ENCODE measurements at regions of chr7 and their contacts with region 1.

Region 1: DNA sequence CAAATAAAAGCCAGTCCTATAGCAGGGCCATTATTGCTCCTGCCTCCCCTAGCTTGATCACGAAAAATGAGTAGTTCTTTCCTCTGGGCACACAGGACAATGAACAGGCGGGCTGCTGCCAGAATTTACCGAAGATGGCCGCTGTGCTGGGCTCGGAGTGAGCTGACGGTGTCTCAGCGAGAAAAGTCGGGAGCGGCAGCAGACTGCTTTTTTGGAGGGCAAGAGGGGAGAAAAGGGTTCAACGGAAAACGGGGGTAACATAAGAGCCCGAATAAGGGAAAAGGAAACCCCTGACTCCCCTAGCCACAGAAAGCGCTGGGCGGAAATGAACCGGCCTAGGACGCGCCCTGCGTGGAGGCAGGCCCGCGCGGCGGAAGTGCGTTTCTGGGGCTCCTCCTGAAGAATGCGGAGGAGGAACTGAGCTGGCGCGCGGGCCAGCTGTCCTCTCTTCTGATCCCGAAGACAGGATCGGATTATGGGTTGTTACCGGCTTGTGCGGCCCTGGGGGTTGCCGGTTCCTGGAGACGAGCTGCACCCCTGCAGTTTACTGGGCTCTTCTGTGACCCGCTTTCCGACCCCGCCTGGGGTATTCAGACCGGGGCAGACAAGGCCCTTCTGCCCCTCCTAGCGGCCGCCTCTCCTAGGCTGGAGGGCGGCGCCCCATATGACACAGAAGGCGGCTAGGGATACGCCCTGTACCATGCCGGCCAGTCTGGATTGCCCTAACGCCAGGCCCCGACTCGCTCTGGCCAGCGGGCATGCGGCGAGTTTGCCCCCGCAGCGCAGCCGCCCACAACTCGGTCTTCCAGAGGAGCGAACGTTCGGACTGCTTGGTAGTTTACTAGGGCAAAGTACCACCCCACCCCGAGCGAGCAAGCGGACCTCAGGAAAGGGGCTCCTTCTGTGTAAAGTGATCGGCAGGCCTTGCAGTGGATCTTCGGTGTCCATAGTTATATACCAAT is 30.1 kb upstream of the KMT2E start:
- DNase-seq: peak; percentile 82
- H3K4me3 Mint-ChIP-seq: peak overlapping the region; percentile 99
- H3K27ac Mint-ChIP-seq: peak overlapping the region; percentile 100
- H3K4me1 Mint-ChIP-seq: peaks cover 76% of the 10 kb centered on the region
- H3K27me3 Mint-ChIP-seq: no peaks in the 10 kb centered on the region

Region 2: DNA sequence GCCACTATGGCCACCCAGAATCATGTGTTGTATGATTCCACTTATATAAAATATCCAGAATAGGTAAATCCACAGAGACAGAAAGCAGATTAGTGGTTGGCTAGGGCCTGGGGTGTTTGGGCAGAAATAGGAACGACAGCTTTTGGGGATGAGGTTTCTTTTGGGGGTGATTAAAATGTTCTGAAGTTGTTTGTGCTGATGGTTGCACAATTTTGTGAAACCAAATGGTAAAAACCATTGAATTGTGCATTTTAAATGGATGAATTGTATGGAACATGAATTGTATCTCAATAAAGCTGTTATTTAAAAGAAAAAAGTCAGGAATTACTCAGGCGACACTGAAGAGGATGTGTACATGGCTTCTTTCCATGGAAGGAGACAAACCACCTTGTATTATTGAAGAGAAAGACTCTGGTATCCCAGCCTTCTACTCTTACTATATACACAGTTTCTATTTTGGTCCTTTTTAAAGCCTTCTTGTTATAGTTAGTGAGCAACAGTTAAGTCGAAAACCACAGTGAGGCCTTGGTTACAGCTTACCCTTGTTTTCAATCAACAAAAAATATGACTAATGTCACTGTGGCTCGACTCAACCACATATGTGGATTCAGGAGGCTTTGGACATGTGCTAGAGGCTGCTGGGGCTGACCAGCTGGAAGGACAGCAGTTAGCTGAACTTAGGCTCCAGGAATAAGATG is 27.0 kb before region 1 on chr7:
- intact Hi-C with region 1: loop called (anchors 1 kb)
- DNase-seq: peak; percentile 62
- H3K4me3 Mint-ChIP-seq: peak overlapping the region; percentile 69
- H3K27ac Mint-ChIP-seq: peak overlapping the region; percentile 100
- H3K4me1 Mint-ChIP-seq: peaks cover 67% of the 10 kb centered on the region
- H3K27me3 Mint-ChIP-seq: no peaks in the 10 kb centered on the region

Region 3: DNA sequence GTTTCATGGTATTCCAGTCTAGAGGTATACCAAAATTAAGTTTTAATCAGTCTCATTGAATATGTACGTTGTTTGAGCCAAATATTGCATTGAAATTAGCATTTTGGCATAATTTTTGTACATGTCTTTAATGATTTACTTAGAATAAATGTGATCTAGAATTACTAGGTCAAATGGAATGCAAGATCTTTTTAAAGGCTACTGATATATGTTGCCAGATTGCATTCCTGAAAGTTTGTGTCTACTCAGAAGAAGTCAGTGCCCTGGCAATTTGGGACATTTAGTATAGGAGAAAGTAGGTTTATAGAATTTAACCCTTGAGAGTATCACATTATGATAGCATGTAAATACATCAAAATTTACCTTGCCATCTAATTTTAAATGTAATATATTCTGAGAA is 62.6 kb after region 1 on chr7:
- intact Hi-C with region 1: loop called (anchors 1 kb)
- DNase-seq: no peak
- H3K4me3 Mint-ChIP-seq: no peak overlapping the region
- H3K27ac Mint-ChIP-seq: no peak overlapping the region
- H3K4me1 Mint-ChIP-seq: peaks cover 41% of the 10 kb centered on the region
- H3K27me3 Mint-ChIP-seq: no peaks in the 10 kb centered on the region

Region 4: DNA sequence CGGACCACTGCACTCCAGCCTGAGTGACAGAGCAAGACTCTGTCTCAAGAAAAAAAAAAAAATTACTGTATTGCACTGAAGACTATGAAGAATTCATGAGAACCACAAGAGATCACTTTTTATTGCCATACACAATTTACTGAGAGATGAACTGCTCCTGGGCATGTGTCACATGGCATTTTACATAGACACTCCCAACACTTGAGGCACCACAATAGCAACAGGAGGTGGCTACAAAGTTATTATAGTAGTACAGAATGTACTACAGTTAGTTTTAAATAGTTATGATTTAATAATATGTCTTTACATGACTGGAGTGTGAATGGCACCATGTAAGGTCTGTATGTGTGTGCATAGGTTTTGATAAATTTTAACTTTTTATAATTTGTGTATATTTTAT is 100.7 kb after region 1 on chr7:
- intact Hi-C with region 1: no loop called
- DNase-seq: no peak
- H3K4me3 Mint-ChIP-seq: no peak overlapping the region
- H3K27ac Mint-ChIP-seq: no peak overlapping the region
- H3K4me1 Mint-ChIP-seq: peaks cover 22% of the 10 kb centered on the region
- H3K27me3 Mint-ChIP-seq: no peaks in the 10 kb centered on the region

Region 5: GRCh38 chr7:105336009-105336408 is 352.1 kb after region 1 on chr7:
- intact Hi-C with region 1: loop called (anchors 5 kb)
- DNase-seq: no peak
- H3K4me3 Mint-ChIP-seq: no peak overlapping the region
- H3K27ac Mint-ChIP-seq: no peak overlapping the region
- H3K4me1 Mint-ChIP-seq: peaks cover 13% of the 10 kb centered on the region
- H3K27me3 Mint-ChIP-seq: no peaks in the 10 kb centered on the region

Region 6: GRCh38 chr7:105429746-105430612 is 446.1 kb after region 1 on chr7:
- intact Hi-C with region 1: loop called (anchors 1 kb)
- DNase-seq: peak; percentile 19
- H3K4me3 Mint-ChIP-seq: no peak overlapping the region
- H3K27ac Mint-ChIP-seq: no peak overlapping the region
- H3K4me1 Mint-ChIP-seq: peaks cover 12% of the 10 kb centered on the region
- H3K27me3 Mint-ChIP-seq: no peaks in the 10 kb centered on the region

Region 7: GRCh38 chr7:105589356-105590077 is 605.7 kb after region 1 on chr7:
- intact Hi-C with region 1: loop called (anchors 5 kb)
- DNase-seq: peak; percentile 24
- H3K4me3 Mint-ChIP-seq: no peak overlapping the region
- H3K27ac Mint-ChIP-seq: no peak overlapping the region
- H3K4me1 Mint-ChIP-seq: peaks cover 19% of the 10 kb centered on the region
- H3K27me3 Mint-ChIP-seq: peaks cover 3% of the 10 kb centered on the region

Measured in activated T-helper 1 cell treated with anti-CD3 and anti-CD28 coated beads, Interleukin-12 subunit alpha, Interleukin-12 subunit beta, Interleukin-2, Interleukin-4 antibody, amounts not matched to agents 30 ng/mL and 10 ng/mL and 1 ng/mL, durations not matched to agents 14 hours and 24 hours and 36 hours (primary cell).